SK-N-SH (cell line): ENCODE measurements at regions of chr9 and their contacts with region 1.

Region 1: DNA sequence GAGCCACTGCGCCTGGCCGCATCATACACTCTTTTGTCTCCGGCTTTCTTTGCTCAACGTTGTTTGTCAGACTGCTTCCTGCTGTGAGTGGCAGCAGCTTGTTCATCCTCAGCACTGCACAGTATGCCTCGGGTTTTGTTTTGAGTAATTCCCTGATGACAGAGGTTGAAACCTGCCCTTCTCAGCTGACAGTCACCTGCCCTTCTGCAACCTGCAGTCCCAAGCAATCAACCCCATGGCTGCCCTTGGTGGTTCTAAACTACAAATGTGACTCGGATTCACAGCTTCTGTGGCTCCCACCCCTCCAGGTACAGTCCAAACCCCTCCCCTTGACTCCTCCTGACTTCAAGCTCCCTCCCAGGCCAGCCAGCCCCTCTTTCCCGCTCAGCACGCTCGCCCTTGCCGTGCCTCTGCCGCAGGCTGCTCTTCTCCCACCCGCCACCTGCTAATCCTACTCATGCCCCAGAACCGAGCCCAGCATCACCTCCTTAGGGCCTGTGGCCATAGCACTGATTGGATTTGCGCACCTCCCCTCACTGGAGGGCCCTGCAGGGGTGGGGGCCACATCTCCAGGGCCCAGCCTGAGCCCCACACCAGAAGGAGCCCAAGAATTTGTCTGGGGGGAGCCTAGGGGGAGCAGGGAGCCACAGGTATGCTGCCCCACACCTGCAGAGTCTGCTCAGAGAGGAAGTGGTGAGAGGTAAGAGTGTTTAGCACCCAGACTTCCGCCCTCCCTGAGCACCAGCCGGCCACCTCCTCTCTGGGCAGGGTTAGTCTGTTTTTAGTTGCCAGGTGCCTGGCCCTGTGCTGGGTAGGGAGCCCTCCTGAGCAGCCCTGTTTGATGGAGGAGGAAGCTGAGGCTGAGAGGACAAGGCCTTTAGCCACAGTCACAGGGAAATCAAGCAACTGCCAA is 10.1 kb downstream of the EEIG1 start:
- DNase-seq: peak; percentile 10
- H3K4me3 ChIP-seq: no peak overlapping the region; a peak in 1 of 4 replicates
- H3K27ac ChIP-seq: peak overlapping the region; percentile 91 to 93
- H3K4me1 ChIP-seq: peaks cover 92 to 100% of the 10 kb centered on the region in 2 experiments
- H3K27me3 ChIP-seq: no peaks in the 10 kb centered on the region
- CTCF ChIP-seq: no peak
- EP300 ChIP-seq: no peak
- RAD21 ChIP-seq: no peak

Region 2: DNA sequence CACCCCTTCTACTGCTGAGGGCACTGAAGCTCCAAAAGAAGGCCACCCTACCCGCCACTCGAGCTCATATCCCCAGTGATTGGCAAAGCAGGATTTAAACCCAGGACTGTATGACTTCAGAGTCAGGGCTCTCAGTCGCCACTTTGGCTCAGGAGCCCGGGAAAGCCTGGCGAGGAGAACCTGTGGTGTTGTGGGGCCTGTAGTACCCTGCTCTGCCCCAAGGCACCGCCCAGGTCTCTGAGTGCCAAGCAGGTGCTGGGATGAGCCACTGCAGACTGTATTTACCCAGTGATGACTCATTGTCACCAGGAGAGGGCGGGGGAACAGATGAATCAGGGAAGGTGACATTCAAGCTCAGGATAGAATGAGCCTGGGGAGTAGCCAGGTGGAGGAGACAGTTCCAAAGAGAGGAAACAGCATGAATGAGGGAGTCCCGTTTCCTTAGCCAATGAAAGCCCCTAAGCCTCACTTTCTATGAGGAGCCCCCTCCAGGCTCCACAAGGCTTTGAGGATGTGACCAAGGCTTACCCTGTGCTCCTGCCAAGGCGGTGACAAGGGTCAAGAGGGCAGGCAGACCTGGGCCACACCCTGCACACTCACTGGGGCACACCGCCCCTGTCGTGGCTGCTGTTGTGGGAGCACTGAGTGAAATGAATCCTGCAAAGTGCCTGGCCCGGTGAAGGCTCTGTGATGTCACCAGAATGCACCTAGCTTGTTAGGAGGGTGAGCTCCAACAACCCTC is 15.2 kb before region 1 on chr9:
- CTCF ChIA-PET with region 1: interaction called, 21 read pairs
- POLR2A ChIA-PET with region 1: no interaction called
- DNase-seq: peak; percentile 79
- H3K4me3 ChIP-seq: no peak overlapping the region
- H3K27ac ChIP-seq: peak overlapping the region in 1 of 2 experiments; percentile 54; a peak in 1 of 4 replicates
- H3K4me1 ChIP-seq: peaks cover 0 to 46% of the 10 kb centered on the region in 2 experiments; a peak in 2 of 4 replicates
- H3K27me3 ChIP-seq: no peaks in the 10 kb centered on the region
- CTCF ChIP-seq: no peak
- EP300 ChIP-seq: no peak
- RAD21 ChIP-seq: peak; percentile 59

Region 3: GRCh38 chr9:128001779-128002298 is 31.2 kb after region 1 on chr9:
- CTCF ChIA-PET with region 1: interaction called, 10 read pairs
- POLR2A ChIA-PET with region 1: interaction called, 4 read pairs
- DNase-seq: peak; percentile 72
- H3K4me3 ChIP-seq: no peak overlapping the region
- H3K27ac ChIP-seq: peak overlapping the region; percentile 75 to 87
- H3K4me1 ChIP-seq: peaks cover 12 to 33% of the 10 kb centered on the region in 2 experiments
- H3K27me3 ChIP-seq: no peaks in the 10 kb centered on the region
- CTCF ChIP-seq: no peak
- EP300 ChIP-seq: peak; percentile 28 to 71; a peak in 2 of 4 replicates
- RAD21 ChIP-seq: no peak; the same call in 1 of the 2 replicates

Region 4: DNA sequence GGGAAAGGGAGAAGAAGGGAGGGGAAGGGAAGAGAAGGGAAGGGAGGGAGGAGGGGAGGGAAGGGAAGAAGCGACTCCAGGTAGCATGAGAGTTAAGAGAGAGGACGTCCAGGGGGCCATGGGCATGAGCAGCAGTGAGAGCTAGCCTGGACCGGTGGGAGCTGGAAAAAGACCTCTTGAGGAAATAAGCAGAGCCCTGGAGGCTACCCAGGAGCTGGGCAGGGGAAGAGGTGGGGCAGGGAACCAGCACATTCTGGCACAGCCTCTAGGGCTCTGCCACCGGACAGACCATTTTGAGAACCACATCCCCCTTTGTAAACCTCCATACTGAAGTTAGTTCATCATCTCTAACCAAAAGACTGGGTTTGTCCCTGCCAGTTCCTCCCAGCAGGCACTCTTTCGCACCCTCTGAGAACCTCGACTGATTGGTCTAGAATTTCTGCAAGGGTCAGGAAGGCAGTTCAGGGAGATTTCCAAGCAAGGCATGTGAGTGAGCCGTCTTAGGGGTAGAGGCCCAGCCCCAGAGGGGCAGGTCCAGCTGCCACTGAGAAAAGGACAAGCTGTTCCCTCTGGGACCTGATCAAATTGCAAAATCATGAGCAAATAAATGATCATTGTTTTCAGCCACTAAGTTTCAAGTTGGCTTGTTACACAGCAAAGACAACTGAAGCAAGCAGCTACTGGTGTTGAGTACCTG is 84.8 kb after region 1 on chr9:
- CTCF ChIA-PET with region 1: no interaction called
- POLR2A ChIA-PET with region 1: no interaction called
- DNase-seq: no peak
- H3K4me3 ChIP-seq: no peak overlapping the region
- H3K27ac ChIP-seq: no peak overlapping the region
- H3K4me1 ChIP-seq: peaks cover 6 to 10% of the 10 kb centered on the region in 2 experiments; a peak in 2 of 4 replicates
- H3K27me3 ChIP-seq: no peaks in the 10 kb centered on the region
- CTCF ChIP-seq: no peak
- EP300 ChIP-seq: no peak
- RAD21 ChIP-seq: no peak